Left cardiac atrium (tissue), 4 donors: ENCODE measurements at regions of chr6 and their contacts with region 1.

Region 1: GRCh38 chr6:158072083-158072721 is 90.5 kb downstream of the SYNJ2 start:
- DNase-seq: peak; percentile 78
- ATAC-seq: peak; percentile 62 to 64

Region 2: GRCh38 chr6:157732021-157732417 is 340.2 kb before region 1 on chr6:
- intact Hi-C with region 1: no loop called
- DNase-seq: no peak
- ATAC-seq: no peak

Region 3: DNA sequence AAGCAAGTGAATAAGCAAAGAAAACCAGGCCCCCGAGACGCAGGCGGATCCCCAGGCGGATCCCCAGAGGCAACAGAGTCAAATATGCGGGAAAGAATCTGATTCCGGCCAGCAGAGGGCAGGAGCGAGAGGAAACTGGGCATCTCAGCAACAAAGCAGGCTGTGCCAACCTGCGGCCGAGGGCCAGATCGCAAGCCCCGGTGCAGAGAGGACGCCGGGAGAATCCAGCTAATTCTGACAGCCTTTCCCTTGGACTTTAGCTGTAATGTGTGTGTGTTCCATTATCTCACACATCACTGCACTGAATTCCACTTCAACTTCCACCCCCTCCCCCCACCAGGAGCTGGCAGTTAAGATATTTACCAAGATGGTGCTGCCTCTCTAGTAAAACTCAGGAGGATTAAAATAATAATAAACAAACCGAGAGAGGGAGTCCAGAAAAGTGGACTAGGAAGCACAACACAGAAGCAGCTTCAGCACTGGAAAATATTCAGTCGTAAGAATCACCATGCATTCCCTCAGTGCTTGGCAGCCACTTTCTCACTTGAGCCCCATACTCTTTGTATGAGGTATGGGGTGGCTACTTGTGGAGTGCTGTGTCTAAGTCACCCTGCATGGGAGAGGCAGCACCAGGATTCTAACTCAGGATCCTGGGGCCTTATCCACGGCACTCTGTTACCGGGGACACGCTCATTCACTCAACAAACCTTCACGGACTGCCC is 315.3 kb before region 1 on chr6:
- intact Hi-C with region 1: loop called in 1 of 2 experiments (anchors 10 kb)
- DNase-seq: peak; percentile 91
- ATAC-seq: peak; percentile 87 to 95

Region 4: GRCh38 chr6:157929765-157930319 is 142.4 kb before region 1 on chr6:
- intact Hi-C with region 1: loop called in 1 of 2 experiments (anchors 10 kb)
- DNase-seq: no peak
- ATAC-seq: no peak

Region 5: DNA sequence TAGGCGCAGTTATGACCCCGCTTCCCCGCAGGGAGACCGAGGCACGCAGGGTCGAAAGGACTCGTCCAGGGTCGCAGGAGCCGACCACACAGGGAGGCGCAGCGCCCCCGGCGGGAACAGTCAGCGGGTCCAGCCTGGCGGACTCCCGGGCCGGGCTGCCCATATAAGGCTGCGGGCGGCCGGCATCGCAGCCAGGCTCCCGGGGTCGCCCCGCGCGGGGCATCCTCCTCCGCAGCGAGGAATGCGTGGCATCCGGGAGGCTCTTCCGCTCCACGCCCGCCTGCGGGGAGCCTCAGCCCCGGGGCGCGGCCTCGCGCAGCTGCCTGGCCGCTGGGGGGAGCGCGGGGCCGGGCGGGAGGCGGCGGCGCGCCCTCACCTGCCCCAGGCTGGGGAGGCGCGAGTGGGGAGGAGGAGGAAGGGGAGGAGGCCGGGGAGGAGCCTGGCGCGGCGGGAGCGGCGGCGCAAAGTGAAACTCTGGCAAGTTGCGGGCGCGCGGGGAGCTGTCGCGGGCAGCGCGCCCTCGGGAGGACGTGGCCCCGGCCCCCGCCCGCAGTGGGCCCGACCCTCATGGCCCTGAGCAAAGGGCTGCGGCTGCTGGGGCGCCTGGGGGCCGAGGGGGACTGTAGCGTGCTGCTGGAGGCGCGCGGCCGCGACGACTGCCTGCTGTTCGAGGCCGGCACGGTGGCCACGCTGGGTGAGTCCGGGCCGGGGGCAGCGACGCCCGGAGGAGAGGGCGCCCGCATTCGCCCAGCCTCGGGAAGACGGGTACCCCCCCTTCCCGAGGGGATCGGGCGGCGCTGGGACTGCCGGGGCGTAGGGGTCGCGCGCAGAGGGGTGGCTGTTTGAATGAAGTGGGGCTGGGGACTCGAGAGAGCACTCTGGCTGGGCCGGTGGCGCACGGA is 90.6 kb before region 1 on chr6 and contains the start of gene SYNJ2:
- intact Hi-C with region 1: loop called (anchors 2 to 5 kb)
- DNase-seq: peak; percentile 82
- ATAC-seq: peak; percentile 91 to 93
- total RNA-seq, gene SYNJ2: 10.2 to 23.4 TPM

Region 6: DNA sequence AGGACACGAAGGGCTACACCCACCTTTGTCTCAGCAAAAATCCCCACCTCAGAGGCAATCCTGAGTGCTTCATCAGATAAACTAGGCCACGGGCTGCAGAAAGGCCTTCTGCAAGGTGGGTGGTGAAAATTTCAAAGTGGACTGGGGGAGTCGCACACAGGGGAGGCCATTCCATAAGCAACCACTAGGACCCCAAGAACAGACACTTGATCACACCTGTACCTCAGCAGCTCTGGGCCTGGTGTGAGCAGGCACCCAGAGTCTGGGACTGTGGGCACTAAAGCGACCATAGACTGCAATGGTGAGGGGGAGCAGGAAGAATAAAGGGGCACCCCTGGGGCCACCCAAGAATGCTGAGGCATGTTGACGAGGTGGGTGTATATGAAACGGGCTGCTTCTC is 43.3 kb after region 1 on chr6:
- intact Hi-C with region 1: no loop called
- DNase-seq: no peak
- ATAC-seq: no peak